Activated T-helper 1 cell treated with anti-CD3 and anti-CD28 coated beads, Interleukin-12 subunit alpha, Interleukin-12 subunit beta, Interleukin-2, Interleukin-4 antibody, amounts not matched to agents 30 ng/mL and 10 ng/mL and 1 ng/mL, durations not matched to agents 14 hours and 24 hours and 36 hours (primary cell): ENCODE measurements at regions of chr20 and their contacts with region 1.

Region 1: GRCh38 chr20:58870239-58871014 is 17.9 kb downstream of the GNAS start:
- DNase-seq: peak; percentile 17
- H3K4me3 Mint-ChIP-seq: no peak overlapping the region
- H3K27ac Mint-ChIP-seq: no peak overlapping the region
- H3K4me1 Mint-ChIP-seq: peaks cover 4% of the 10 kb centered on the region
- H3K27me3 Mint-ChIP-seq: peaks cover 32% of the 10 kb centered on the region

Region 2: DNA sequence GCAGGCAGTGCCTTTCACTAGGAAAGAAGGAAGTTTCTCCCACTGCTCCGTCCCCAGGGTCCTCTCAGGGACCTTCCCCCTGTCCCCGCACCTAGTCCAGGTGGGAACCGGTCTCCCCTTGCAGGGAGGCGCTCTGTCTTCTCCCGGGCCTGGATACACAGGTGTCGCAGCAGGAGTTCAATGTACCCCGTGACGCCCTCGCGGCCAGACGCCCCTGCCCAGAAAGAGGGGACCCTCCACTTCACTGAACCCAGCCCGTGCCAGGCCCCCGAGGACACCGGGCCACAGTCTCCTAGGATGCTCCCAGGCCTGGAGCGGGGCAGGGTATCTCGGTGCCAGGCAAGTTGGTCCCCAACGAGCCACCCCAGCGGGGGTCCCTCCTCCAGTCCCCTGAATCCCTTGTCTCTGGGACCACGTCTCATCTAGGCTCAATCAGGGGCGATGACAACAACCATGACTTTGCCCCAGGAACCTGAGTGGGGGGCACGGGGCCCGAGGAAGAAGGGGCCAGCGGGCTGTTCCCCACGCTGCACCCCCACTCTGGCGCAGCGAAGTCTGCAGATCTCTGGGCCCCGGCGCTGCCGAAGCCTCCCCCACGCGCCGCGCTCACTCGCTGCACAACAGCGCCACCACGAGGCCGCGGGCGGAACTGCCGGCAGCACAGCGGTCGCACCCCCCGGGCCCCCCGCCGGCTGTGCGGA is 533.0 kb after region 1 on chr20:
- intact Hi-C with region 1: loop called (anchors 2 kb)
- DNase-seq: peak; percentile 54
- H3K4me3 Mint-ChIP-seq: peak overlapping the region; percentile 45
- H3K27ac Mint-ChIP-seq: no peak overlapping the region
- H3K4me1 Mint-ChIP-seq: no peaks in the 10 kb centered on the region
- H3K27me3 Mint-ChIP-seq: peaks cover 5% of the 10 kb centered on the region

Region 3: DNA sequence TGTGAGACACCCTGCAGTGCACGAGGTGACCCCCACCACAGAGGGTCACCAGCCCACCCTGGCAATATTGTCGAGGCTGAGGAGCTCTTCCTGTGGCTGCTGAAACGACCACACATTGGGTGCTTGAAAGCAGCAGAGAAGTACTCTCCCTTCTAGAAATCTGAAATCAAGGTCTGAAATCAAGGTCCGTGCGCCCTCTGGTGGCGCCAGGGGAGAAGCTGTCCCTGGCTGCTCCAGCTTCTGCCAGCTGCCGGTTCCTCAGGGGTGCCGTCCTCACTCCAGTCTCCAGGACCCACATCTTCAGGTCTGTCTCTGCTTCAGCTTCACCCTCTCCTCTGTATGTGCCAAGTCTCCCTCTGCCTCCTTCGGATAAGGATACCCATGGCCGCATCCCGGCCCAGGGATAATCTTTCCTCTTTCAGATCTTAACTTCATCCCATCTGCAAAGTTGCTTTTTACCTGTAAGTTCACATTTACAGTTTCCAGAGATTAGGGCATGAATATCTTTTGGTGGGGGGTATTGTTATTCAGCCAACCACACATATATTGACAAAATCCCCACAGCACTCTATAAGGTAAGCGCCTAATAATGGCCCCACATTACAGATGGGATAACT is 625.6 kb after region 1 on chr20:
- intact Hi-C with region 1: loop called (anchors 1 kb)
- DNase-seq: peak; percentile 35
- H3K4me3 Mint-ChIP-seq: no peak overlapping the region
- H3K27ac Mint-ChIP-seq: no peak overlapping the region
- H3K4me1 Mint-ChIP-seq: no peaks in the 10 kb centered on the region
- H3K27me3 Mint-ChIP-seq: peaks cover 7% of the 10 kb centered on the region